Sigmoid colon (tissue), 7 donors: ENCODE measurements at regions of chr19 and their contacts with region 1.

Region 1: GRCh38 chr19:17215125-17215971 is at the start of gene USE1:
- DNase-seq: peak; percentile 96
- H3K4me3 ChIP-seq: peak within 1 kb of the TSS; percentile 61 to 91 (median 76)
- H3K27ac ChIP-seq: peak within 1 kb of the TSS; percentile 85 to 93 (median 90)
- H3K4me1 ChIP-seq: peaks cover 0 to 19% (median 15%) of the 10 kb centered on the region in 4 donors
- H3K27me3 ChIP-seq: no peaks in the 10 kb centered on the region
- CTCF ChIP-seq: no peak
- EP300 ChIP-seq: no peak
- POLR2A ChIP-seq: peak; percentile 6 to 43
- total RNA-seq, gene USE1: 22.5 to 45.3 (median 37.8) TPM

Region 2: GRCh38 chr19:17266975-17267788 is 51.8 kb after region 1 on chr19 and contains the start of gene BABAM1:
- intact Hi-C with region 1: loop called (anchors 2 kb)
- DNase-seq: peak; percentile 98
- H3K4me3 ChIP-seq: peak within 1 kb of the TSS; percentile 61 to 92 (median 75)
- H3K27ac ChIP-seq: peak within 1 kb of the TSS; percentile 80 to 86 (median 80)
- H3K4me1 ChIP-seq: peaks cover 0 to 13% (median 11%) of the 10 kb centered on the region in 4 donors
- H3K27me3 ChIP-seq: no peaks in the 10 kb centered on the region
- CTCF ChIP-seq: no peak
- EP300 ChIP-seq: no peak
- POLR2A ChIP-seq: peak in 1 of 2 donors; percentile 7
- total RNA-seq, gene BABAM1: 90.0 to 101 (median 98.7) TPM